ENCODE measurements at regions of chr10 and their contacts with region 1.

Region 1: GRCh38 chr10:12720217-12720981 is 281.1 kb downstream of the CCDC3 start:
- DNase-seq: peak; percentile 79 to 98
- H3K4me3 ChIP-seq: peak overlapping the region in 1 of 2 donors; percentile 9
- H3K27ac ChIP-seq: peak overlapping the region; percentile 87 to 88
- H3K4me1 ChIP-seq: peaks cover 14 to 27% of the 10 kb centered on the region in 2 donors
- H3K27me3 ChIP-seq: no peaks in the 10 kb centered on the region
- CTCF ChIP-seq: no peak

Region 2: GRCh38 chr10:12390733-12391132 is 329.7 kb before region 1 on chr10:
- intact Hi-C with region 1: loop called (anchors 5 kb)
- DNase-seq: peak in 1 of 2 donors; percentile 71
- H3K4me3 ChIP-seq: peak overlapping the region in 1 of 2 donors; percentile 16
- H3K27ac ChIP-seq: peak overlapping the region; percentile 42 to 68
- H3K4me1 ChIP-seq: peaks cover 3 to 16% of the 10 kb centered on the region in 2 donors
- H3K27me3 ChIP-seq: no peaks in the 10 kb centered on the region
- CTCF ChIP-seq: no peak

Region 3: GRCh38 chr10:12703813-12704212 is 16.6 kb before region 1 on chr10:
- intact Hi-C with region 1: no loop called
- DNase-seq: no peak
- H3K4me3 ChIP-seq: no peak overlapping the region
- H3K27ac ChIP-seq: peak overlapping the region; percentile 13 to 60
- H3K4me1 ChIP-seq: peaks cover 14 to 38% of the 10 kb centered on the region in 2 donors
- H3K27me3 ChIP-seq: no peaks in the 10 kb centered on the region
- CTCF ChIP-seq: no peak

Region 4: GRCh38 chr10:12902135-12902572 is 181.8 kb after region 1 on chr10:
- intact Hi-C with region 1: loop called (anchors 5 kb)
- DNase-seq: no peak
- H3K4me3 ChIP-seq: no peak overlapping the region
- H3K27ac ChIP-seq: peak overlapping the region; percentile 90 to 91
- H3K4me1 ChIP-seq: peaks cover 4 to 26% of the 10 kb centered on the region in 2 donors
- H3K27me3 ChIP-seq: no peaks in the 10 kb centered on the region
- CTCF ChIP-seq: peak; percentile 4 to 68 (median 56)

Region 5: DNA sequence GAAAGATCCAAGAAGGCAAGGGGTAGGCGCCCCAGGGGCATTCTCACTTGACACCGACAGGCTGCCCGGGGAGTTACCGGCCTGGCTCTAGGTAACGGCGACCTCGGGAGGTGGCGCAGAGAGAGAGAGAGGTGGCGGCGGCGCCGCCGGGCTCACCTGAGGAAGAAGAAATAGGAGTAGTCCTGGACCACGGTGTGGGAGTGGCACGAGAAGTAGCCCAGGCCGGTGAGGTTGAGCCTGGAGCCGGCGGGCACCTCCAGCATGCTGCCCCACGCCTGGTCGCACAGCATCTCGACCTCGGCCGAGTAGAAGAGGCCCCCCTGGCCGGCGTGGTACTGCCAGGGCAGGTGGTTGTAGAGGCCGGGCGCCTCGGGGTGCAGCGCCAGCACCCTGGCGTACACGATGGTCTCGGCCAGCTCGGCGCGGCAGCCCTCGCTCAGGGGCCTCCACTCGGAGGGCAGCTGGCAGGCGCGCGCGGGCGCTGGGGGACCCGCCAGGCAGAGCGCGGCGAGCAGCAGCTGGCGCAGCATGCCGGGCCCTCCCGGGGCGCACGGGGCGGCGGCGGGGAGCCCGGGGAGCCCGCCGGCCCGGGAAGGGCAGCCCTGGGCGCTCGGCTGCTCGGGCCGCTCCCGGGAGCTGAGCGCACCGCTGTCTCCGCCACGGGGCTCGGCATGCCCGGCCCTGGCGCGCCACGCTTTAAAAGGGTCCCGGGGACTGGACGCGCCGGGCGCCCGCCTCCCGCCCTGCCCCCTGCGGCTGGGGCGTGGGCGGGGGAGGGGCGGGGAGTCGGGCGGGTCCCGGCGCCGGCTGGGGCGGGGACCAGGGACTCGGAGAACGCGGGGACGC is 280.9 kb after region 1 on chr10 and contains the start of gene CCDC3:
- intact Hi-C with region 1: loop called (anchors 5 kb)
- DNase-seq: peak in 1 of 2 donors; percentile 67
- H3K4me3 ChIP-seq: peak within 1 kb of the TSS; percentile 68 to 75
- H3K27ac ChIP-seq: peak within 1 kb of the TSS; percentile 70 to 81
- H3K4me1 ChIP-seq: peaks cover 2 to 12% of the 10 kb centered on the region in 2 donors
- H3K27me3 ChIP-seq: no peaks in the 10 kb centered on the region
- CTCF ChIP-seq: no peak
- total RNA-seq, gene CCDC3: 86.0 TPM

Region 6: GRCh38 chr10:13056456-13057077 is 336.2 kb after region 1 on chr10:
- intact Hi-C with region 1: loop called (anchors 5 kb)
- DNase-seq: no peak
- H3K4me3 ChIP-seq: no peak overlapping the region
- H3K27ac ChIP-seq: no peak overlapping the region
- H3K4me1 ChIP-seq: no peaks in the 10 kb centered on the region
- H3K27me3 ChIP-seq: no peaks in the 10 kb centered on the region
- CTCF ChIP-seq: peak; percentile 23 to 71 (median 34)

Region 7: GRCh38 chr10:13074561-13075451 is 354.4 kb after region 1 on chr10:
- intact Hi-C with region 1: loop called (anchors 2 kb)
- DNase-seq: peak in 1 of 2 donors; percentile 76
- H3K4me3 ChIP-seq: no peak overlapping the region
- H3K27ac ChIP-seq: no peak overlapping the region
- H3K4me1 ChIP-seq: no peaks in the 10 kb centered on the region
- H3K27me3 ChIP-seq: no peaks in the 10 kb centered on the region
- CTCF ChIP-seq: peak; percentile 62 to 87 (median 74)

Measured in ascending aorta (tissue), 2 donors.